ENCODE measurements at regions of chrX and their contacts with region 1.

Region 1: GRCh38 chrX:56248492-56248891 is 16.3 kb downstream of the KLF8 start:
- DNase-seq: no peak
- H3K4me3 ChIP-seq: no peak overlapping the region
- H3K27ac ChIP-seq: no peak overlapping the region
- H3K4me1 ChIP-seq: no peaks in the 10 kb centered on the region
- H3K27me3 ChIP-seq: no peaks in the 10 kb centered on the region
- CTCF ChIP-seq: peak in 2 of 3 experiments; percentile 54 to 64

Region 2: GRCh38 chrX:56219700-56220099 is 28.8 kb before region 1 on chrX:
- intact Hi-C with region 1: loop called (anchors 2 kb)
- DNase-seq: no peak
- H3K4me3 ChIP-seq: no peak overlapping the region
- H3K27ac ChIP-seq: no peak overlapping the region
- H3K4me1 ChIP-seq: no peaks in the 10 kb centered on the region
- H3K27me3 ChIP-seq: no peaks in the 10 kb centered on the region
- CTCF ChIP-seq: peak in 2 of 3 experiments; percentile 36 to 44

Region 3: GRCh38 chrX:56232221-56233082 is 16.0 kb before region 1 on chrX and contains the start of gene KLF8:
- intact Hi-C with region 1: no loop called
- DNase-seq: peak in 1 of 2 donors; percentile 67
- H3K4me3 ChIP-seq: peak within 1 kb of the TSS; percentile 61 to 74
- H3K27ac ChIP-seq: peak within 1 kb of the TSS; percentile 76 to 82
- H3K4me1 ChIP-seq: no peaks in the 10 kb centered on the region
- H3K27me3 ChIP-seq: no peaks in the 10 kb centered on the region
- CTCF ChIP-seq: no peak
- total RNA-seq, gene KLF8: 5.7 TPM

Region 4: DNA sequence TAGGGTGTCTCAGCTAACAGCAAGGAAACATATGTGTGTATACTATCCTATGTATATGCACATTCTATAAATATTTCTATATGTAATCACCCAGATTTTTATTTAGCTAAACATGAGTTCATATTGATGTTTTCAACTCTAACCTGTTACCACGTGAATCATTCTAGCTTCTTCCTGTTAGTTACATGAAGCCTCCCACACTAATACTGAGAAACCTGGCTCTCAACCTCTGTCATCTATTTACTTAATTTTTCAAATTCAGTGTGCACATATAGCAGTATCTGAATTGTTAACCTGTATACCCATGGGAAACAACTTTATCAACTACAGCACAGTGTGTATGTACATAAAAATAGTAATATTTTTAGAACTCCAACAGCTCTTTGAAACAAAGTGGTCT is 41.0 kb after region 1 on chrX:
- intact Hi-C with region 1: no loop called
- DNase-seq: no peak
- H3K4me3 ChIP-seq: no peak overlapping the region
- H3K27ac ChIP-seq: no peak overlapping the region
- H3K4me1 ChIP-seq: no peaks in the 10 kb centered on the region
- H3K27me3 ChIP-seq: no peaks in the 10 kb centered on the region
- CTCF ChIP-seq: no peak